Activated B cell treated with CpG ODN at 0.5 μM for 24 hours (primary cell): ENCODE measurements at regions of chr11 and their contacts with region 1.

Region 1: GRCh38 chr11:95296621-95297025 is 65.6 kb upstream of the SESN3 start:
- DNase-seq: peak; percentile 41
- ATAC-seq: peak; percentile 89
- H3K4me3 Mint-ChIP-seq: peak overlapping the region; percentile 79
- H3K27ac Mint-ChIP-seq: peak overlapping the region; percentile 89
- H3K4me1 Mint-ChIP-seq: peaks cover 50% of the 10 kb centered on the region
- H3K27me3 Mint-ChIP-seq: no peaks in the 10 kb centered on the region
- CTCF ChIP-seq: no peak

Region 2: GRCh38 chr11:95182397-95182796 is 114.2 kb before region 1 on chr11:
- CTCF ChIA-PET with region 1: interaction called, 3 read pairs
- POLR2A ChIA-PET with region 1: interaction called, 5 read pairs
- intact Hi-C with region 1: loop called (anchors 5 kb)
- DNase-seq: no peak
- ATAC-seq: no peak
- H3K4me3 Mint-ChIP-seq: no peak overlapping the region
- H3K27ac Mint-ChIP-seq: peak overlapping the region; percentile 51
- H3K4me1 Mint-ChIP-seq: peaks cover 8% of the 10 kb centered on the region
- H3K27me3 Mint-ChIP-seq: no peaks in the 10 kb centered on the region
- CTCF ChIP-seq: no peak

Region 3: DNA sequence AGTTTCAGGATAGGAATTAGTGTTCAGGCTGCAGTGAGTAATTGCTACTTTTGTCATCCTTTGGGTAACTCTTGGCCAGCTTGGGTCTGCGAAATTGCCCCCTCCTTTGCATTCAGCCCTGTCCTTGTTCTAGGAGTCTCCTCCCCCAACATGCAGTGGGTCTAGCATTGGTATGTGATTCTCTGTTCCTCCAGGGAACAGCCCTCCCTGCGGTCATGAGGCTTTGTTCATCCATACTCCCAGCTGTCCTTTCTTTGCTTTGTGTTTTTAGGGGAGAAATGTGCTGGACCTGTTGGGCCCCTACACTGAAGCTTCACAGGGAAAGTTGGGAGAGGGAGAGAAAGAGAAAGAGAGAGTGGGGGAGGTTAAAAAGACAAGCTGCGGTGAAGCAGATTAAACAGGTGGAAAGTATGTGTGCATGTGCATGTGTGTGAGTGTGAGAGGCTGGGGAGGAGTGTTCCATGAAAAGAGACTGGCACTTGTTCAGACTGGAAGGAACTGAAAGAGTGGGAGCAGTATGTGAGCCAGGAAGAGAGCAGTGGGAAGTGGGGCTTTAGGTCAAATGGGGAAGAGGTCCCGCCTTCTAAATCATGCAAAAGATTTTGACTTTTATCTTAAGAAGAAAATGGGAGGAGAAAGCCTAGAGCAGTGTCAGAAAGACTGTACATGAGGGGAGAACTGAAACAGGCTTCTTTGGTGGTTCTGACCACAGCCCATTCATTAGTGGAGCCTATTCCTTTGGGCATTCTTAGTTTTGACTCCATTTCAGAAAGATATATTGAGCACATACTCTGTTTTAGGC is 47.8 kb before region 1 on chr11:
- CTCF ChIA-PET with region 1: interaction called, 11 read pairs
- POLR2A ChIA-PET with region 1: interaction called, 32 read pairs
- intact Hi-C with region 1: loop called (anchors 1 kb)
- DNase-seq: no peak
- ATAC-seq: peak; percentile 86
- H3K4me3 Mint-ChIP-seq: peak overlapping the region; percentile 73
- H3K27ac Mint-ChIP-seq: peak overlapping the region; percentile 95
- H3K4me1 Mint-ChIP-seq: peaks cover 59% of the 10 kb centered on the region
- H3K27me3 Mint-ChIP-seq: no peaks in the 10 kb centered on the region
- CTCF ChIP-seq: no peak

Region 4: GRCh38 chr11:95254131-95254704 is 42.4 kb before region 1 on chr11:
- CTCF ChIA-PET with region 1: interaction called, 11 read pairs
- POLR2A ChIA-PET with region 1: interaction called, 32 read pairs
- intact Hi-C with region 1: loop called (anchors 1 kb)
- DNase-seq: peak; percentile 54
- ATAC-seq: peak; percentile 94
- H3K4me3 Mint-ChIP-seq: peak overlapping the region; percentile 75
- H3K27ac Mint-ChIP-seq: peak overlapping the region; percentile 91
- H3K4me1 Mint-ChIP-seq: peaks cover 81% of the 10 kb centered on the region
- H3K27me3 Mint-ChIP-seq: no peaks in the 10 kb centered on the region
- CTCF ChIP-seq: no peak

Region 5: DNA sequence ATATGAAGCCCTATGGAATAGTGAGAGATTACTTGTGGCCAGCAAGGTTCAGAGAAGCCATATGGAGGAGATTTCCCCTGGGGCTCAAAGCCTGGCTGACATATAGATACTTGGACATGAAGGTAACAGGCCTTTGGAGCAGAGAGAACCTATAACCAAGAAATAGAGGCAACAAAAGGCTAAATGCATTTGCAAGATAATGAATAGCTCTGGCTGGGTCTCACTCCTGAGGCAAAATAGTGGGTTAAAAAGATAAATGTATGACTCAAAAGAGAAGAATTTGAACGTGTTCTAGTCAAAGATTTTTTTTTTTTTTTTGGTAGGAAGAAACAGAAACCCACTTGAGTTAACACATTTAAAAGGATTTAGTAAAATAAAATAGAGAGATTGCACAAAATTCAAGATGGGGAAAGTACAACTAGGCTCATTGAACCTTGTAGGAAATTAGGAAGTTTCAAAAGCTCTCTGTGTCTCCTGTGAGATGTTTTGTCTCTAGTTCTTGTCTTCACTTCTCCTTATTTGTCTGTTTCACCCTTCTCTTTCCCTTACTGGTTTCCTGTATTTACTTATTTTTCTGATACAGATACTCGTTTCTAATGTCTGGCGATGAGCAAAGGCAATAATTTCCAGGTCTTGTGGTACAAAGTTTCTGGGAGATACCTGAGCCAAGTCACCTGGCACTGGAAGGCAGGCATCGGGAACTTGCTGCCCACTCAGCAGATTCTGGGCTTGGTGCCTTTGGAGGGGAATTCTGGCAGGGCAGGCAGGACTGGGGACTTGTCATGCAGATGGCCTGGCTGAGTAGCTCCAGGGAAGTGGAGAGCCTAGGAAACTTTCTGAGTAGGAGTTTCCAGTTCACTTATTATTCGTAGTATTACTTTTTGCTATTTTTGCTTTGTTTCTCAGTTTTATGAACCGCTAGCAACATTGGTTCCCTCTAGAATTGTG is 16.4 kb before region 1 on chr11:
- CTCF ChIA-PET with region 1: no interaction called
- POLR2A ChIA-PET with region 1: interaction called, 4 read pairs
- intact Hi-C with region 1: loop called (anchors 1 kb)
- DNase-seq: peak; percentile 24
- ATAC-seq: peak; percentile 84
- H3K4me3 Mint-ChIP-seq: peak overlapping the region; percentile 39
- H3K27ac Mint-ChIP-seq: peak overlapping the region; percentile 85
- H3K4me1 Mint-ChIP-seq: peaks cover 49% of the 10 kb centered on the region
- H3K27me3 Mint-ChIP-seq: no peaks in the 10 kb centered on the region
- CTCF ChIP-seq: no peak

Region 6: GRCh38 chr11:95337175-95337957 is 40.7 kb after region 1 on chr11:
- CTCF ChIA-PET with region 1: no interaction called
- POLR2A ChIA-PET with region 1: interaction called, 10 read pairs
- intact Hi-C with region 1: loop called (anchors 2 kb)
- DNase-seq: peak; percentile 48
- ATAC-seq: peak; percentile 63
- H3K4me3 Mint-ChIP-seq: no peak overlapping the region
- H3K27ac Mint-ChIP-seq: no peak overlapping the region
- H3K4me1 Mint-ChIP-seq: peaks cover 1% of the 10 kb centered on the region
- H3K27me3 Mint-ChIP-seq: no peaks in the 10 kb centered on the region
- CTCF ChIP-seq: no peak

Region 7: DNA sequence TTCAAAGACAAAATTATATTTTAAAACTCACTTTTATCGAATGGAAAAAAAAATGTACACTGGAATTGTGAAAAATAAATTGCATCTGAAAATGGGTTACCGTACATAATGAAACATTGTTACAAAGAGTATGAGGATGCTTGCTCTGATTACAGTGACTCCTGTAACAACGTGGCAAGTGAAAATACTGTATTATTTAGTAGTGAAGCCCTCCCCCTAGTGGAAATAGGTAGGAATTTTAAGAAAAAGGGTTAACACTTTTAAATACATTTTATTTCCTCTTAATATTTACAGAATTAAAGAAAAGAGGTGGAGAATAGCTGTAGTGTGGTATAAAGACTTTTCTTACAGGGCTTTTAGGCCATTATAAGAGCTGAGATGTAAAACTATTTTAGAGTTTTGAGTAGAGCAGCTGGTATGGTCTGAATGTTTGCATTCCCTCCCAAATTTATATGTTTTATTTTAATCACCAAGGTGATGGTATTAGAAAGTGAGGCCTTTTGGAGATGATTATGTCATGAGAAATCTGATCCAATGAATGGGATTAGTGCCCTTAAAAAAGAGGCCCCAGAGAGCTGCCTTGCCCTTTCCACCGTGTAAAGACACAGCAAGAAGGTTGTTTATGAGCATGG is 467.8 kb after region 1 on chr11:
- CTCF ChIA-PET with region 1: interaction called, 3 read pairs
- POLR2A ChIA-PET with region 1: no interaction called
- intact Hi-C with region 1: loop called (anchors 5 kb)
- DNase-seq: no peak
- ATAC-seq: peak; percentile 69
- H3K4me3 Mint-ChIP-seq: no peak overlapping the region
- H3K27ac Mint-ChIP-seq: no peak overlapping the region
- H3K4me1 Mint-ChIP-seq: peaks cover 23% of the 10 kb centered on the region
- H3K27me3 Mint-ChIP-seq: no peaks in the 10 kb centered on the region
- CTCF ChIP-seq: no peak

Region 8: DNA sequence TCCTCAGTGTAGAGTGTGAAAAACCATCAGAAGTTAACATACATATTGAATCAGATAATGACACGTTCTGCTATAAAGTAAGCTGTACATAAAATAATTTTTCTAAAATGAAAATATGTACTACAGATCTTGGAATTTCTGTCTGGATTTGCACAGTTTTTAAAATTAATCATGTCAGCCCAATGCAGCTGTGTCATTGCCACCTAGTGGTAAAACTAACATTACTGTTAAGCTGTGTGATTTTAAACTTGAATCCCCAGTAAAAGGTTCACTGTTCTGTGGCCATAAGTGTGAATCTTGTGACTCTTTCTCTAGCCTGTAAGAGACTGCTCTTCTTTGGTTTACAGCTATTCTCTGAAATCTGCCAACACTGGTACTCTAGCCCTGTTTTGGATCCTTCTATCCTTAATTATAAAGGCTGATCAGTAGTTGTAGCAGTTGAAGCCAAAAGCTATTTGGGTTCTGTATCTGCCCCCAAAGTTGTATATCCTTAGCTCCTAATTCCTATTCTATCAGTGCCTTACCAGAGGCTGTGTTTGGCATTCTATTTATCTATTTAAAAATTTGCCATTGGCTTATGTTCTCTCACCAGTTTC is 1097.2 kb after region 1 on chr11:
- CTCF ChIA-PET with region 1: no interaction called
- POLR2A ChIA-PET with region 1: no interaction called
- intact Hi-C with region 1: no loop called
- DNase-seq: no peak
- ATAC-seq: no peak
- H3K4me3 Mint-ChIP-seq: no peak overlapping the region
- H3K27ac Mint-ChIP-seq: no peak overlapping the region
- H3K4me1 Mint-ChIP-seq: peaks cover 17% of the 10 kb centered on the region
- H3K27me3 Mint-ChIP-seq: peaks cover 2% of the 10 kb centered on the region
- CTCF ChIP-seq: peak; percentile 89